Naive thymus-derived CD4-positive, alpha-beta T cell (primary cell): ENCODE measurements at regions of chr19 and their contacts with region 1.

Region 1: GRCh38 chr19:17470068-17470841 is at the start of gene SLC27A1:
- DNase-seq: peak; percentile 76 to 90 (median 84)
- ATAC-seq: peak; percentile 84
- H3K4me3 ChIP-seq: peak within 1 kb of the TSS; percentile 96
- H3K4me3 Mint-ChIP-seq: peak within 1 kb of the TSS; percentile 92 to 100 (median 96)
- H3K27ac ChIP-seq: peak within 1 kb of the TSS; percentile 77
- H3K27ac Mint-ChIP-seq: peak within 1 kb of the TSS; percentile 74 to 98 (median 93)
- H3K4me1 ChIP-seq: peaks cover 6 to 22% of the 10 kb centered on the region in 2 donors
- H3K4me1 Mint-ChIP-seq: peaks cover 22 to 38% (median 30%) of the 10 kb centered on the region in 7 donors
- H3K27me3 ChIP-seq: no peaks in the 10 kb centered on the region
- H3K27me3 Mint-ChIP-seq: peaks cover 0 to 22% (median 0%) of the 10 kb centered on the region in 5 donors
- total RNA-seq, gene SLC27A1: 3.1 to 15.1 (median 11.0) TPM

Region 2: DNA sequence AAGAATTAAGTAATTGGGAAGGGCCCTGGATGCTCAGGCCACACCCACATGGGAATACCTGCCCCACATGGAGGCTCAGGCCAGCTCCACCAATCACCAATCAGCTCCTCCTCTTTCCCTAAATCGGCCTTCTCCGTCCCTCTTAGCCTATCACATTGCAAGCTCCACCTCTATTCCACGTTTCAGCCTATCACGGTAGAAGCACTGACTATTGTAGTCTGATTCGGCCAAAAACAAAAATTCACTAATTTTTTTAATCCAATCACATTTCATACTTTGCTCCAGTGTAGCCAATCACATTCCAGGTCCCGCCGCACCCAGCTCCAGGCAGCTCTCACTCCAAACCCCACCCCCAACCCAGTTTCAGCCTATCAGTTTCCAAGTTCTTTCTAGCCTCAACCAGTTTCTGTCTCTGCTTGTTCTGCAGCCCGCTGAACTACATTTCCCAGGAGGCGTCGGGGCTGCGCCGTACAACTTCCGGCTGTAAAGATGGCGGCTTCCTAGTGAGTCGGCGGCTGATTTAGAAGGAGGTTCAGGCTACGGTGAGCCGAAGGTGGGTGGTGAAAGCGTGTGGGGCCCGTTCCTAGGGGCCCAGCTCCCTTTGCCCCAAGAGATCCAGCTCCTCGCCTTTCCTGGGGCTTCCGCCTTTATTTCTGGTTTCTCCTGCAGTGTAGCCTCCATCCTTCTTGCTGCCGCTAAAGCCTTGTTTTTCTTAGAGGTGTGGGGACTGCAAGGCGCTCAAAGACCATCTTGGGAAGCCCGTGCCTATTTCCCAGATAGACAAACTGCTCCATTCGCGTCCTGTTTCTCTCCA is 203.1 kb before region 1 on chr19 and contains the start of gene BABAM1:
- CTCF ChIA-PET with region 1: no interaction called
- POLR2A ChIA-PET with region 1: no interaction called
- intact Hi-C with region 1: loop called in 1 of 2 experiments (anchors 1 kb)
- DNase-seq: peak; percentile 69 to 99 (median 99)
- ATAC-seq: peak; percentile 96
- H3K4me3 ChIP-seq: peak within 1 kb of the TSS; percentile 84
- H3K4me3 Mint-ChIP-seq: peak within 1 kb of the TSS; percentile 68 to 92 (median 84)
- H3K27ac ChIP-seq: peak within 1 kb of the TSS; percentile 76
- H3K27ac Mint-ChIP-seq: peak within 1 kb of the TSS; percentile 69 to 93 (median 82)
- H3K4me1 ChIP-seq: peaks cover 6 to 18% of the 10 kb centered on the region in 2 donors
- H3K4me1 Mint-ChIP-seq: peaks cover 8 to 30% (median 22%) of the 10 kb centered on the region in 7 donors
- H3K27me3 ChIP-seq: no peaks in the 10 kb centered on the region
- H3K27me3 Mint-ChIP-seq: peaks cover 0 to 2% (median 0%) of the 10 kb centered on the region in 5 donors
- total RNA-seq, gene BABAM1: 72.4 to 111 (median 95.6) TPM

Region 3: GRCh38 chr19:17321655-17322489 is 148.4 kb before region 1 on chr19:
- CTCF ChIA-PET with region 1: no interaction called
- POLR2A ChIA-PET with region 1: no interaction called
- intact Hi-C with region 1: no loop called
- DNase-seq: no peak
- ATAC-seq: no peak
- H3K4me3 ChIP-seq: no peak overlapping the region
- H3K4me3 Mint-ChIP-seq: no peak overlapping the region
- H3K27ac ChIP-seq: no peak overlapping the region
- H3K27ac Mint-ChIP-seq: peak overlapping the region in 3 of 9 donors; percentile 4 to 45 (median 41)
- H3K4me1 ChIP-seq: no peaks in the 10 kb centered on the region
- H3K4me1 Mint-ChIP-seq: peaks cover 3 to 10% (median 5%) of the 10 kb centered on the region in 7 donors
- H3K27me3 ChIP-seq: no peaks in the 10 kb centered on the region
- H3K27me3 Mint-ChIP-seq: no peaks in the 10 kb centered on the region

Region 4: GRCh38 chr19:17346109-17346671 is 124.1 kb before region 1 on chr19:
- CTCF ChIA-PET with region 1: interaction called, 5 read pairs
- POLR2A ChIA-PET with region 1: no interaction called
- intact Hi-C with region 1: loop called (anchors 1 kb)
- DNase-seq: peak; percentile 46 to 85 (median 71)
- ATAC-seq: peak; percentile 98
- H3K4me3 ChIP-seq: no peak overlapping the region
- H3K4me3 Mint-ChIP-seq: no peak overlapping the region
- H3K27ac ChIP-seq: no peak overlapping the region
- H3K27ac Mint-ChIP-seq: peak overlapping the region in 2 of 9 donors; percentile 13 to 46
- H3K4me1 ChIP-seq: peaks cover 0 to 5% of the 10 kb centered on the region in 2 donors
- H3K4me1 Mint-ChIP-seq: peaks cover 0 to 15% (median 6%) of the 10 kb centered on the region in 7 donors
- H3K27me3 ChIP-seq: peaks cover 0 to 2% of the 10 kb centered on the region in 2 donors
- H3K27me3 Mint-ChIP-seq: peaks cover 4 to 19% (median 7%) of the 10 kb centered on the region in 5 donors

Region 5: GRCh38 chr19:17419621-17420466 is 50.4 kb before region 1 on chr19 and contains the start of gene MVB12A:
- CTCF ChIA-PET with region 1: no interaction called
- POLR2A ChIA-PET with region 1: interaction called, 7 read pairs
- intact Hi-C with region 1: loop called in 1 of 2 experiments (anchors 1 kb)
- DNase-seq: peak; percentile 85 to 98 (median 96)
- ATAC-seq: peak; percentile 99
- H3K4me3 ChIP-seq: peak within 1 kb of the TSS; percentile 79
- H3K4me3 Mint-ChIP-seq: peak within 1 kb of the TSS; percentile 87 to 95 (median 91)
- H3K27ac ChIP-seq: peak within 1 kb of the TSS; percentile 70
- H3K27ac Mint-ChIP-seq: peak within 1 kb of the TSS; percentile 73 to 93 (median 89)
- H3K4me1 ChIP-seq: peaks cover 12 to 15% of the 10 kb centered on the region in 2 donors
- H3K4me1 Mint-ChIP-seq: peaks cover 4 to 28% (median 19%) of the 10 kb centered on the region in 7 donors
- H3K27me3 ChIP-seq: no peaks in the 10 kb centered on the region
- H3K27me3 Mint-ChIP-seq: no peaks in the 10 kb centered on the region
- total RNA-seq, gene MVB12A: 19.5 to 45.1 (median 33.3) TPM

Region 6: DNA sequence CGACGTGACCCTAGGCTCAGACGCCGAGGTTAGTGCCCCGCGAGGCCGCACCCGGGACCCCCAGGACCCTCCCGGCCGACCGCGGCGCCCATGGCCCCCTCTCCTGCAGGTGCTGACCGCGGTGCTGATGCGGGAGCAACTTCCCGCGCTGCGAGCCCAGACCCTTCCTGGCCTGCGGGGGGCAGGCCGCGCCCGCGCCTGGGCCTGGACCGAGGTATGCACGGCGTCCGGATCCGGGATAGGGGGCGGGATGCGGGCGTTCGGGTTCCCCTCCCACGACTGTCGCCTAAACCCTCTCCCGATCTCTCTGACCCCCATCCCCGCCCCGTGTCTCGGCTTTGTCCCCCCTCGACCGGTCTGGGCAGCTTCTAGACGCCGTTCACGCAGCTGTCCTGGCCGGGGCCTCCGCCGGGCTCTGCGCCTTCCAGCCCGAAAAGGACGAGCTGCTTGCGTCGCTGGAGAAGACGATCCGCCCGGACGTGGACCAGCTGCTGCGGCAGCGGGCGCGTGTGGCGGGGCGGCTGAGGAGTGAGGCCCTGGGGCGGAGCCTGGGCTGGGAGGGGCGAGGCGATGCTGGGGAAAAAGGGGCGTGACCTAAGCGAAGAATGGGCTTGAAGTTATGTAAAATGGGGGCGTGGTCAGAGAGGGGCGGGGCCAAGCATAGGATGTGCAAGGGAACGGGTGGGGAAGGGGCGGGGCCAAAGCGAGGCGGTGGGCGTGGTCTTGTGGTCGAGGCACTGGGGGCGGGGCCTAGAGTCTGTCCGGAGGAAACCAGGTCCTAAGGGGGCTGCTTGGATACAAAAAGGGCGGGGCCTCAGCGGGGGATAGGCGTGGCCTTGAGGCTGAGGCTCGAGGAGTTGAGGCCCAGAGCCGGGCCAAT is 69.2 kb after region 1 on chr19:
- CTCF ChIA-PET with region 1: no interaction called
- POLR2A ChIA-PET with region 1: no interaction called
- intact Hi-C with region 1: loop called in 1 of 2 experiments (anchors 1 kb)
- DNase-seq: peak; percentile 87 to 99 (median 94)
- ATAC-seq: peak; percentile 100
- H3K4me3 ChIP-seq: peak overlapping the region; percentile 68
- H3K4me3 Mint-ChIP-seq: peak overlapping the region; percentile 84 to 90 (median 86)
- H3K27ac ChIP-seq: peak overlapping the region; percentile 67
- H3K27ac Mint-ChIP-seq: peak overlapping the region; percentile 16 to 81 (median 62)
- H3K4me1 ChIP-seq: peaks cover 9 to 10% of the 10 kb centered on the region in 2 donors
- H3K4me1 Mint-ChIP-seq: peaks cover 7 to 23% (median 16%) of the 10 kb centered on the region in 7 donors
- H3K27me3 ChIP-seq: no peaks in the 10 kb centered on the region
- H3K27me3 Mint-ChIP-seq: peaks cover 0 to 34% (median 0%) of the 10 kb centered on the region in 5 donors

Region 7: GRCh38 chr19:18112989-18113478 is 642.8 kb after region 1 on chr19:
- CTCF ChIA-PET with region 1: no interaction called
- POLR2A ChIA-PET with region 1: no interaction called
- intact Hi-C with region 1: no loop called
- DNase-seq: peak; percentile 42 to 82 (median 65)
- ATAC-seq: peak; percentile 46
- H3K4me3 ChIP-seq: no peak overlapping the region
- H3K4me3 Mint-ChIP-seq: peak overlapping the region in 2 of 10 donors; percentile 22 to 40
- H3K27ac ChIP-seq: no peak overlapping the region
- H3K27ac Mint-ChIP-seq: peak overlapping the region in 1 of 9 donors; percentile 44
- H3K4me1 ChIP-seq: peaks cover 14 to 18% of the 10 kb centered on the region in 2 donors
- H3K4me1 Mint-ChIP-seq: peaks cover 26 to 39% (median 35%) of the 10 kb centered on the region in 7 donors
- H3K27me3 ChIP-seq: no peaks in the 10 kb centered on the region
- H3K27me3 Mint-ChIP-seq: peaks cover 0 to 3% (median 0%) of the 10 kb centered on the region in 5 donors